A673 (cell line): ENCODE measurements at regions of chr12 and their contacts with region 1.

Region 1: DNA sequence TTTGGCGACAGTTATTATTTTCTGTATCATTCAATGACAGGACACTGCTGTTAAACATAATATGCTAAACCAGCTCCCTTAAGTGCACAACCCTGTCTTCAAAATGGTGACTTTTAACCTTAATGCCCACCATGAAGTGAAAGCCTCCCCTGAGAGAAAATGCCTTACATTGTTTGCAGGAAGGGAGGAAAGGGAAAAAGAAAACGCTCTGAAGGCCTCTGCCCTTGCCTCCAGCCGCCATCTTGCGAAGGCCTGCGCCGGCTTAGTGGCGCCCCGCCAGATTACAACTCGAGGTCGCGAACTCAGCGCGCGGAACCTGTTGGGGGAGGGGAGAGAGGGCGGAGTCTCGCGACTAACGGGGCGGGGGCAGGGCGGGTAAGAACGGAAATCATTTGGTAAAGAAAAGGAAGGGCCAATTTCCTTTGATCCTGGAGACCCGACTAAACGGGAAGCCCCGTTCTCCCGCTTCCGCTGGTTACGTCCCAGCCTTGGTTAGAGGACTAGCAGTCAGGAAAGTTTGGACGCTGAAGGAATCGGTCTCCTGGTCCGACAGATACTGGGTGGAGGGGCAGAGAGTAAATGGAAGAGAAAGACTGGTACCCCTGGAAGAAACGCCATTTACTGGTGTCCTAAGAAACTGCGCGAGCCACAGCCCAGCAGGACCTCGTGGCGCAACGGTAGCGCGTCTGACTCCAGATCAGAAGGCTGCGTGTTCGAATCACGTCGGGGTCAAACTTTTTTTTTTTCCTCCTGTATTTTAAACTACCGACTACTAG is 11.6 kb upstream of the TMPO start:
- DNase-seq: peak; percentile 95
- H3K4me3 ChIP-seq: peak overlapping the region; percentile 65
- H3K27ac ChIP-seq: peak overlapping the region; percentile 95
- H3K4me1 ChIP-seq: no peaks in the 10 kb centered on the region
- H3K27me3 ChIP-seq: no peaks in the 10 kb centered on the region
- CTCF ChIP-seq: no peak

Region 2: DNA sequence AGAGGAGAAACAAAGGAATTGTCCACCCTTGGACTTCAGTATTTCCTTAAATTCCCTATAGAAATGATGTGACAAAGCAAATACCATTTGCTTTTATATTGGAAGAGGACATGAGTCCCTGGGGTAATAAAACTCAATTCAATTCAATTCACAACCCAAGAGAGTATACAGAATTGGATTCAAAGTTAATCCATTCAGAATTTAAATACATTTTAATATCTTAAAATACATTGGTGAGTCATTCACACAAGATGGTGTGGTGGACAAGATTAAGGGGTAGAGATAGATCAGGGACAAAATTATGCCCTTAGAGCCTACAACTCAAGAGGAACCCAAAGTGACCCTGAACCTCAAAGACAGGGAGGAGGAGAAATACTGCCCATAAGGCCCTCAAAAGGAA is 483.4 kb before region 1 on chr12:
- CTCF ChIA-PET with region 1: no interaction called
- POLR2A ChIA-PET with region 1: no interaction called
- intact Hi-C with region 1: loop called (anchors 2 kb)
- DNase-seq: peak; percentile 67
- H3K4me3 ChIP-seq: no peak overlapping the region
- H3K27ac ChIP-seq: peak overlapping the region; percentile 48
- H3K4me1 ChIP-seq: peaks cover 35% of the 10 kb centered on the region
- H3K27me3 ChIP-seq: no peaks in the 10 kb centered on the region
- CTCF ChIP-seq: no peak

Region 3: GRCh38 chr12:98439981-98440581 is 63.7 kb before region 1 on chr12:
- CTCF ChIA-PET with region 1: no interaction called
- POLR2A ChIA-PET with region 1: no interaction called
- intact Hi-C with region 1: loop called (anchors 5 kb)
- DNase-seq: peak; percentile 98
- H3K4me3 ChIP-seq: no peak overlapping the region
- H3K27ac ChIP-seq: peak overlapping the region; percentile 88
- H3K4me1 ChIP-seq: peaks cover 16% of the 10 kb centered on the region
- H3K27me3 ChIP-seq: no peaks in the 10 kb centered on the region
- CTCF ChIP-seq: no peak; the same call in 1 of the 2 replicates